Naive thymus-derived CD4-positive, alpha-beta T cell (primary cell): ENCODE measurements at regions of chr2 and their contacts with region 1.

Region 1: DNA sequence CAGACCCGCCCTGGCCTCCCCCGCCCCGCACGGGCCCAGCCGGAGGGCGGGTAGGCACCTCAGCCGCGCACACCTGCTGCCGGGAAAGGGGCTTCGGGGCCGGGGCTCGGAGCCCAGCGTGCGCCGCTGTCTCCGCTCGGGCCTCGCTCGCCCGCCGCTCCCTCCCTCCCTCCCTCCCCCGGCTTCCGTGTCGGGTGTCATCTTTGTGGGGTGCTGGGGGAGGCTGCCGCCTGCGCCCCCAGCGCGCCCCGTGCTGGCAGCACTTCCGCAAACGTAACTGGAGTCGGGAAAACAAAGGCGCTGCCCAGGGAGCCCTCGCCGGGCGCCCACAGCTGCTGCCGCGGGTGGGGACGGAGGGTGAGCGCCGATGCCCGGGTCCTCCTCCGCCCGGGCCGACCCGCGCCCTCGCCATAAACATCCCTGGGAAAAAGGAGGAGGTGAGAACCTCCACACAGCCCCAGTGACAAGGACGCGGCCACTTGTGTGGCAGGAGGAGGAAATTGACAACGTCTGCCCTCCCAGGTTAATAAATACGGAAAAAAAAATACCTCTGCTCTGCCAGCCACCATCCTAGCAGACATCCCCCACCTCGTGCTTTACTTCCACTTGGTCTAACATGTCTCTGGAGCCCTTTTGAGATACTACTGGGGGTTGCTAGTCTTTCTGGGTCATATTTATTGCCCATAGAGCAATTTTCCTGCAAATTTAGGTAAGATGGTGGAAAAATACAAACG is 550 bp downstream of the MFSD6 start:
- DNase-seq: peak in 8 of 9 donors; percentile 69 to 86 (median 82)
- ATAC-seq: peak; percentile 68
- H3K4me3 ChIP-seq: peak overlapping the region; percentile 76
- H3K4me3 Mint-ChIP-seq: peak overlapping the region; percentile 87 to 95 (median 92)
- H3K27ac ChIP-seq: peak overlapping the region; percentile 100
- H3K27ac Mint-ChIP-seq: peak overlapping the region; percentile 94 to 98 (median 98)
- H3K4me1 ChIP-seq: peaks cover 28 to 41% of the 10 kb centered on the region in 2 donors
- H3K4me1 Mint-ChIP-seq: peaks cover 29 to 52% (median 45%) of the 10 kb centered on the region in 7 donors
- H3K27me3 ChIP-seq: no peaks in the 10 kb centered on the region
- H3K27me3 Mint-ChIP-seq: no peaks in the 10 kb centered on the region

Region 2: DNA sequence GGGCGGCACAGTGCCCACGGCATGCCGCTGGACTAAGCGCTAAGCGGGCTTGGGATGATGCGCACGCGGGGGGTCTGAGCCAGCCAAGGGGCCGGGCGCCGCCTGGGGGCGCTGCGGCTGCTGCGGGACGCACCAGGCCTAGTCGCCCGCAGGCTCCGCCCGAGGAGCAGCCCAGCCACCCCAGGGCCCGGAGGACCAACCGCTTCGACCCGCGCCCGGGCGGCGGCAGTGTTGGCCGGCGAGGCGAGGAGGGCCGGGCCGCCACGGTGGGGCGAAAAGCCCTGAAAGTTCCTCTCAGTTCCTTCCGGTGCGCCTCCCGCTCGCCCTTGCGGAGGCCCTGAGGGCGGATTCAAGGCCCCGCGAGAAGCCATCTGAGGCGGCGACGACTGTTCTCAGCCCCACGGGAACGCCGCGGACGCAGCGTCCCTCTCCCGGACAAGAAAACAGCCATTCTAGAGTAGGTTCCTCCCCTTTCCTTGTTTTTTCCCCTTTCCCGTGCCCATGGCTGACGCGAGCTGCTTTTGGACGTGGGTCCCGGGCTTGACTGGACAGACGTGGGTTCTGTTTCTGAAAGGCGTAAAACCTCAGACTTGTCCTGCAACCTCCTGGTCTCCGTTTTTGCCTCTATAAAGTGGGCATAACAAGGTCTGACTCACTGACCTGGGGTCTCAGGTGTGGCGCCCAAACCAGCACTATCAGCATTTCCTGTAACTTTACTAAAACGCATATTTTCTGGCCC is 734.2 kb before region 1 on chr2 and contains the start of gene ANKAR:
- CTCF ChIA-PET with region 1: no interaction called
- POLR2A ChIA-PET with region 1: no interaction called
- intact Hi-C with region 1: loop called in 1 of 2 experiments (anchors 1 kb)
- DNase-seq: peak; percentile 71 to 88 (median 84)
- ATAC-seq: peak; percentile 98
- H3K4me3 ChIP-seq: peak within 1 kb of the TSS; percentile 62
- H3K4me3 Mint-ChIP-seq: peak within 1 kb of the TSS; percentile 88 to 96 (median 95)
- H3K27ac ChIP-seq: peak within 1 kb of the TSS; percentile 86
- H3K27ac Mint-ChIP-seq: peak within 1 kb of the TSS; percentile 96 to 99 (median 97)
- H3K4me1 ChIP-seq: peaks cover 9 to 12% of the 10 kb centered on the region in 2 donors
- H3K4me1 Mint-ChIP-seq: peaks cover 17 to 49% (median 40%) of the 10 kb centered on the region in 7 donors
- H3K27me3 ChIP-seq: no peaks in the 10 kb centered on the region
- H3K27me3 Mint-ChIP-seq: no peaks in the 10 kb centered on the region
- total RNA-seq, gene ANKAR: 4.3 to 17.9 (median 10.3) TPM

Region 3: GRCh38 chr2:190319555-190320498 is 88.9 kb before region 1 on chr2 and contains the start of gene HIBCH:
- CTCF ChIA-PET with region 1: no interaction called
- POLR2A ChIA-PET with region 1: interaction called, 3 read pairs
- intact Hi-C with region 1: loop called (anchors 1 kb)
- DNase-seq: peak; percentile 56 to 88 (median 68)
- ATAC-seq: peak; percentile 94
- H3K4me3 ChIP-seq: peak within 1 kb of the TSS; percentile 83
- H3K4me3 Mint-ChIP-seq: peak within 1 kb of the TSS; percentile 85 to 100 (median 97)
- H3K27ac ChIP-seq: peak within 1 kb of the TSS; percentile 82
- H3K27ac Mint-ChIP-seq: peak within 1 kb of the TSS; percentile 91 to 99 (median 95)
- H3K4me1 ChIP-seq: peaks cover 8 to 13% of the 10 kb centered on the region in 2 donors
- H3K4me1 Mint-ChIP-seq: peaks cover 27 to 54% (median 48%) of the 10 kb centered on the region in 7 donors
- H3K27me3 ChIP-seq: no peaks in the 10 kb centered on the region
- H3K27me3 Mint-ChIP-seq: no peaks in the 10 kb centered on the region
- total RNA-seq, gene HIBCH: 11.3 to 25.0 (median 21.6) TPM

Region 4: GRCh38 chr2:190468814-190469569 is 60.3 kb after region 1 on chr2:
- CTCF ChIA-PET with region 1: no interaction called
- POLR2A ChIA-PET with region 1: no interaction called
- intact Hi-C with region 1: no loop called
- DNase-seq: no peak
- ATAC-seq: peak; percentile 26
- H3K4me3 ChIP-seq: no peak overlapping the region
- H3K4me3 Mint-ChIP-seq: peak overlapping the region in 2 of 10 donors; percentile 2
- H3K27ac ChIP-seq: no peak overlapping the region
- H3K27ac Mint-ChIP-seq: peak overlapping the region in 6 of 9 donors; percentile 15 to 73 (median 21)
- H3K4me1 ChIP-seq: peaks cover 7 to 28% of the 10 kb centered on the region in 2 donors
- H3K4me1 Mint-ChIP-seq: peaks cover 25 to 71% (median 60%) of the 10 kb centered on the region in 7 donors
- H3K27me3 ChIP-seq: no peaks in the 10 kb centered on the region
- H3K27me3 Mint-ChIP-seq: no peaks in the 10 kb centered on the region

Region 5: DNA sequence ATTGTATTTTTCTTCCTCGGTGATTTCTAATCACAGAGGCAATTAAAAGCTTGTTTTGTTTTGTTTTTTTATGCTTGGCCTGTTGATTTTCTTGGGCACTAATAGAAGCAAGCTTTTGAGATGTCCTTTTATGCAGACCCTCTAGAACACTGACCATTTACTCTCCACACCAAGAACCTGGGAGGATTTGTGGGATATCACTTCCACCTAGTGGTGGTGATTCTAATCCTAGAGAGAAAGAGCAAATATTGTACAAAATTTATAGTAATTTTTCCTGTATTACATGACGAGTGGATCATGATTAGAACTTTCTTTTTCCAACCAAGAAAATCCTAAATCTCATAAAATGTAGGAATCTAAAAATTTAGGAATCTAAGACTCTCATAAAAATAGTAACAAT is 102.4 kb after region 1 on chr2:
- CTCF ChIA-PET with region 1: no interaction called
- POLR2A ChIA-PET with region 1: interaction called, 6 read pairs
- intact Hi-C with region 1: loop called in 1 of 2 experiments (anchors 1 kb)
- DNase-seq: no peak
- ATAC-seq: no peak
- H3K4me3 ChIP-seq: no peak overlapping the region
- H3K4me3 Mint-ChIP-seq: no peak overlapping the region
- H3K27ac ChIP-seq: no peak overlapping the region
- H3K27ac Mint-ChIP-seq: peak overlapping the region in 4 of 9 donors; percentile 1 to 64 (median 43)
- H3K4me1 ChIP-seq: peaks cover 8 to 10% of the 10 kb centered on the region in 2 donors
- H3K4me1 Mint-ChIP-seq: peaks cover 7 to 36% (median 26%) of the 10 kb centered on the region in 7 donors
- H3K27me3 ChIP-seq: no peaks in the 10 kb centered on the region
- H3K27me3 Mint-ChIP-seq: no peaks in the 10 kb centered on the region

Region 6: GRCh38 chr2:191013932-191014652 is 605.4 kb after region 1 on chr2 and contains the start of gene STAT1:
- CTCF ChIA-PET with region 1: no interaction called
- POLR2A ChIA-PET with region 1: interaction called, 3 read pairs
- intact Hi-C with region 1: loop called (anchors 2 kb)
- DNase-seq: peak; percentile 93 to 99 (median 97)
- ATAC-seq: peak; percentile 97
- H3K4me3 ChIP-seq: peak within 1 kb of the TSS; percentile 69
- H3K4me3 Mint-ChIP-seq: no peak within 1 kb of the TSS
- H3K27ac ChIP-seq: peak within 1 kb of the TSS; percentile 87
- H3K27ac Mint-ChIP-seq: no peak within 1 kb of the TSS
- H3K4me1 ChIP-seq: peaks cover 41 to 48% of the 10 kb centered on the region in 2 donors
- H3K4me1 Mint-ChIP-seq: peaks cover 23 to 51% (median 42%) of the 10 kb centered on the region in 7 donors
- H3K27me3 ChIP-seq: no peaks in the 10 kb centered on the region
- H3K27me3 Mint-ChIP-seq: no peaks in the 10 kb centered on the region
- total RNA-seq, gene STAT1: 74.1 to 1,177 (median 89.6) TPM